Activated naive CD8-positive, alpha-beta T cell treated with anti-CD3 and anti-CD28 coated beads, Interleukin-2, amount 10 ng/mL, durations not matched to agents 7 days and 5 days (primary cell): ENCODE measurements at regions of chr17 and their contacts with region 1.

Region 1: GRCh38 chr17:1870592-1870991 is 40.8 kb downstream of the RPA1 start:
- DNase-seq: no peak
- ATAC-seq: peak; percentile 68
- H3K4me3 Mint-ChIP-seq: peak overlapping the region; percentile 62
- H3K27ac Mint-ChIP-seq: peak overlapping the region; percentile 90
- H3K4me1 Mint-ChIP-seq: peaks cover 56% of the 10 kb centered on the region
- H3K27me3 Mint-ChIP-seq: no peaks in the 10 kb centered on the region

Region 2: DNA sequence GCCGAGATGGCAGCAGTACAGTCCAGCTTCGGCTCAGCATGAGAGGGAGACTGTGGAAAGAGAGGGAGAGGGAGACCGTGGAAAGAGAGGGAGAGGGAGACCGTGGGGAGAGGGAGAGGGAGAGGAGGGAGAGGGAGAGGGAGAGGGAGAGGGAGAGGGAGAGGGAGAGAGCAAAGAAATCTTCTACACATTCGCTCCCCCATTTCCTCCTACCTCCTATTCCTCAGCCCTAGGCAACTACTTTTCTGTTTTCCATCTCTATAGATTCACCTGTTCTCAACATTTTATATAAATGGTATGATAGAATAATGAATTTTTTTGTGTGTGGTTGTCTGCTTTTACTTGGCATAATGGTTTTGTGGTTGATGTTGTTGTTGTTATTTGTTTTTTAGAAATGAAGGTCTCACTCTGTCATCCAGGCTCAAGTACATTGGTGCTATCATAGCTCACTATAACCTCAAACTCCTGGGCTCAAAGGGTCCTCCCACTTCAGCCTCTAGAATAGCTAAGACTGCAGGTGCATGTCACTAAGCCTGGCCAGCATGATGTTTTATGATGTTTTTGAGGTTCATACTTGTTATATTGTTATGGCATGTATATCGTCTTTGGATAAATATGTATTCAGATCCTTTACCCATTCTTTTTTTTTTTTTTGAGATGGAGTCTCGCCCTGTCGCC is 179.9 kb before region 1 on chr17:
- POLR2A ChIA-PET with region 1: no interaction called
- DNase-seq: no peak
- ATAC-seq: no peak
- H3K4me3 Mint-ChIP-seq: no peak overlapping the region
- H3K27ac Mint-ChIP-seq: no peak overlapping the region
- H3K4me1 Mint-ChIP-seq: peaks cover 2% of the 10 kb centered on the region
- H3K27me3 Mint-ChIP-seq: no peaks in the 10 kb centered on the region

Region 3: DNA sequence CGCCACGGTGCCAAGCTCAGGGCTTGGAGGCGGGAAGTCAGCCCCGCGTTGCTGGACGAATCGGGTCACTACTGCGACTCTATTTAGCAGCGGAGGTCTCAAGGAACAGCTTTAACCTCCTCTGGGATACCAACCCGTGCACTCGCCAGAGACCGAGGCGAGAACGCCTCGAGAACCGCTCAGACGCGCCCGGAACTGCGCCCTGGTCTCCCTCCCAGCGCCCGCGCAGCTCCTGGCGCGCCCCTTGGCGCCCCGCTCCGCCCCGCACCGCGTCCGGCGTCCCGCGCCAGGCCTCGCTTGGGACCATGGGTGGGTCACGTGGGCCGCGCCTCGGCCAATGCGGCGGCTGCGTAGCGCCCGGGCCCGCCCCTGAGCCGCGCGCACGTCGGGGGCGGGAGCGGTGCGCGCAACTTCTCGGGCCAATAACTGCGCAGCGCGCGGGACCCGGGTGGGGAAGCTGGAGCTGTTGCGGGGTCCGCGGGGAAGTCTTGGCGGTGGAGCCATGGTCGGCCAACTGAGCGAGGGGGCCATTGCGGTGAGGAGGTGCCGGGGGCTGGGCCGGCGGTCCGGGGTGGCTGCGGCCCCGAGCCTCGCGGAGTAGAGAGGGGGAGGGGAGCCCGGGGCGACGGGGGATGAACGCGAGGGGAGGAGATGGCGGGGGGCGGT is 40.9 kb before region 1 on chr17 and contains the starts of genes RPA1 and SMYD4:
- POLR2A ChIA-PET with region 1: interaction called, 18 read pairs
- DNase-seq: peak; percentile 96
- ATAC-seq: peak; percentile 96
- H3K4me3 Mint-ChIP-seq: peak within 1 kb of the TSS; percentile 92
- H3K27ac Mint-ChIP-seq: peak within 1 kb of the TSS; percentile 92
- H3K4me1 Mint-ChIP-seq: peaks cover 51% of the 10 kb centered on the region
- H3K27me3 Mint-ChIP-seq: no peaks in the 10 kb centered on the region
- total RNA-seq, gene RPA1: 245 to 252 TPM
- total RNA-seq, gene SMYD4: 44.7 to 48.6 TPM